ENCODE measurements at regions of chr2 and their contacts with region 1.

Region 1: GRCh38 chr2:96773922-96774321 is 13.2 kb downstream of the CNNM4 start:
- DNase-seq: no peak
- H3K4me3 ChIP-seq: no peak overlapping the region
- H3K27ac ChIP-seq: no peak overlapping the region
- H3K27me3 ChIP-seq: no peaks in the 10 kb centered on the region
- CTCF ChIP-seq: no peak

Region 2: DNA sequence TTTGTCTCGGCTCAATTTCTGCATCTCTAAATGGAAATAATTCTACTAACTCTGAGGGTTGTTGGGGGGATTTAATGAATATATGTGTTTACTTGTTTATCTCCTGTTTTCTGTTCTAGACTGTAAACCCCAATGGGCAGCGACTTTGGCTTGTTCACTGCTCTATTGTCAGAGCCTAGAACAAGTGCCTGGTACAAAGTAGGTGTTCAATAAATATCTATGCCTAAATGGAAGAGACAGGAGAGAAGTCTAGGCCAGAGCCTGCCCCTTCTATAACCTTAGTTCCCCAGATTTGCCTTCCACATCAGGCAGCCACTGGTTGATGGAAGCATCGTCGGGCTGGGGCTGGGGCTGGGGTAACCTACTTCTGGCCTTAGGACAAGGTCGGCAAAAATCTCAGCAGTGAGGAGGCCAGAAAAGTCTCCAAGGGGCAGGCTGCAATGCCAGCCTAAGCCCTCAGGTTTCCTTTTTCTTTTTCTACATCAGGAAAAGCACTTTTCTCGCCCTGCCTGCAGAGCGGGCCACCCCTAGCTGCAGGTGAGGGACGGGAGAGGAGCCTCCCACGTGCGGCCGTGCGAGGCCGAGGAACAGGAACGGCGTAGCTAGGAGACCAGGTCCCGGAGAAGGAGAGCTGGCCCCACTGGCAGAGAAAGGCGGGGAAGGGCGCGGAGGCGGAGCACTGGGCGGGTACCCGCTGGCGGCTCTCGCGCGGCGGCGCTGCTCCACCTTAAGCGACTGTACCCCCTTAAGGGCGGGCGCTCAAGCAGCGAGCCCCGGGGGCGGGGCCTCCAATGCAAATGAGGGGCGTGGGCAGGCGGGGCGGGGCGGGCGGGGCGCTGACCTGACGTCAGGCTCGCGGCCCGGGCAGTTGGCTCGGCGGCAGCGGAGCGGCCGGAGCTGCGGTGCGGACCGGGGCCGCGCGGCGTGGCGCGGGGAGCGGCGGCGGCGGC is 13.6 kb before region 1 on chr2 and contains the start of gene CNNM4:
- CTCF ChIA-PET with region 1: interaction called, 16 read pairs
- POLR2A ChIA-PET with region 1: interaction called, 13 read pairs
- DNase-seq: peak; percentile 66
- H3K4me3 ChIP-seq: peak within 1 kb of the TSS; percentile 82
- H3K27ac ChIP-seq: peak within 1 kb of the TSS; percentile 47
- H3K27me3 ChIP-seq: no peaks in the 10 kb centered on the region
- CTCF ChIP-seq: peak; percentile 9; the same call in 1 of the 2 replicates
- polyA plus RNA-seq, gene CNNM4: 4.7 and 4.9 TPM in 2 replicates

Region 3: GRCh38 chr2:96824079-96824870 is 50.4 kb after region 1 on chr2:
- CTCF ChIA-PET with region 1: no interaction called
- POLR2A ChIA-PET with region 1: no interaction called
- DNase-seq: peak; percentile 41
- H3K4me3 ChIP-seq: no peak overlapping the region
- H3K27ac ChIP-seq: no peak overlapping the region
- H3K27me3 ChIP-seq: no peaks in the 10 kb centered on the region
- CTCF ChIP-seq: no peak